Head of caudate nucleus (tissue), 42 donors: ENCODE measurements at regions of chr5 and their contacts with region 1.

Region 1: GRCh38 chr5:147887024-147887627 is 8.6 kb downstream of the SCGB3A2 start:
- DNase-seq: peak in 9 of 42 donors; percentile 7 to 46 (median 13)

Region 2: DNA sequence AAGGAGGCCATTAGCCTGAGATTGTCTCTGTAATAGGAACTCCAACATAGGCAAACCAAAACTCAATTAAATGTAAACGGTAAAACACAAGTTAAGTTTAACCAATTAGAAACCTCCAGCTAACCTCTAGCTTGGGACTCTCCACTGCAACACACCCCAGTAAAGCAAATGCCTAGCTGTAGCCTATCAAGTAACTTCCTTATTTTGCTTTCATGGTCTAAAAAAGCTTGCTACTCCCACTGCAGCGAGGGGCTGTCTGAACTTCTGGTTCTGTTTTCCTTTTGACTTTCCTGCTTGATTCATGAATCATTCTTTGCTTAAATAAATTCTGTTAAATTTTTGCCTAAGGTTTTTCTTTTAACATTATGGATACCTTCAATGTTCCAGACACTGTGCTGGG is 43.6 kb after region 1 on chr5:
- intact Hi-C with region 1: loop called (anchors 5 kb)
- DNase-seq: no peak

Region 3: GRCh38 chr5:147968855-147969254 is 81.7 kb after region 1 on chr5:
- intact Hi-C with region 1: no loop called
- DNase-seq: no peak